ENCODE measurements at regions of chr17 and their contacts with region 1.

Region 1: GRCh38 chr17:39754161-39754951 is 16.6 kb downstream of the GRB7 start:
- DNase-seq: peak; percentile 98
- H3K4me3 ChIP-seq: peak overlapping the region; percentile 75 to 86 (median 82)
- H3K27ac ChIP-seq: peak overlapping the region; percentile 89 to 97 (median 94)
- H3K4me1 ChIP-seq: peaks cover 20 to 26% (median 24%) of the 10 kb centered on the region in 4 donors
- H3K27me3 ChIP-seq: peaks cover 0 to 12% (median 0%) of the 10 kb centered on the region in 4 donors
- CTCF ChIP-seq: peak; percentile 98 to 99 (median 99)
- EP300 ChIP-seq: no peak
- POLR2A ChIP-seq: no peak

Region 2: GRCh38 chr17:39621523-39622379 is 132.6 kb before region 1 on chr17:
- intact Hi-C with region 1: loop called (anchors 1 kb)
- DNase-seq: peak; percentile 99
- H3K4me3 ChIP-seq: no peak overlapping the region
- H3K27ac ChIP-seq: no peak overlapping the region
- H3K4me1 ChIP-seq: peaks cover 3 to 47% (median 36%) of the 10 kb centered on the region in 4 donors
- H3K27me3 ChIP-seq: peaks cover 0 to 48% (median 11%) of the 10 kb centered on the region in 4 donors
- CTCF ChIP-seq: peak; percentile 99 to 100 (median 100)
- EP300 ChIP-seq: no peak
- POLR2A ChIP-seq: no peak

Region 3: GRCh38 chr17:39636927-39637736 is 117.2 kb before region 1 on chr17 and contains the start of gene STARD3:
- intact Hi-C with region 1: loop called (anchors 5 kb)
- DNase-seq: peak; percentile 97
- H3K4me3 ChIP-seq: peak within 1 kb of the TSS; percentile 78 to 95 (median 90)
- H3K27ac ChIP-seq: peak within 1 kb of the TSS; percentile 83 to 90 (median 89)
- H3K4me1 ChIP-seq: peaks cover 52 to 75% (median 66%) of the 10 kb centered on the region in 4 donors
- H3K27me3 ChIP-seq: peaks cover 0 to 6% (median 0%) of the 10 kb centered on the region in 4 donors
- CTCF ChIP-seq: peak in 2 of 3 experiments; percentile 17 to 23
- EP300 ChIP-seq: no peak
- POLR2A ChIP-seq: peak; percentile 6
- total RNA-seq, gene STARD3: 27.5 to 47.3 (median 38.6) TPM

Region 4: DNA sequence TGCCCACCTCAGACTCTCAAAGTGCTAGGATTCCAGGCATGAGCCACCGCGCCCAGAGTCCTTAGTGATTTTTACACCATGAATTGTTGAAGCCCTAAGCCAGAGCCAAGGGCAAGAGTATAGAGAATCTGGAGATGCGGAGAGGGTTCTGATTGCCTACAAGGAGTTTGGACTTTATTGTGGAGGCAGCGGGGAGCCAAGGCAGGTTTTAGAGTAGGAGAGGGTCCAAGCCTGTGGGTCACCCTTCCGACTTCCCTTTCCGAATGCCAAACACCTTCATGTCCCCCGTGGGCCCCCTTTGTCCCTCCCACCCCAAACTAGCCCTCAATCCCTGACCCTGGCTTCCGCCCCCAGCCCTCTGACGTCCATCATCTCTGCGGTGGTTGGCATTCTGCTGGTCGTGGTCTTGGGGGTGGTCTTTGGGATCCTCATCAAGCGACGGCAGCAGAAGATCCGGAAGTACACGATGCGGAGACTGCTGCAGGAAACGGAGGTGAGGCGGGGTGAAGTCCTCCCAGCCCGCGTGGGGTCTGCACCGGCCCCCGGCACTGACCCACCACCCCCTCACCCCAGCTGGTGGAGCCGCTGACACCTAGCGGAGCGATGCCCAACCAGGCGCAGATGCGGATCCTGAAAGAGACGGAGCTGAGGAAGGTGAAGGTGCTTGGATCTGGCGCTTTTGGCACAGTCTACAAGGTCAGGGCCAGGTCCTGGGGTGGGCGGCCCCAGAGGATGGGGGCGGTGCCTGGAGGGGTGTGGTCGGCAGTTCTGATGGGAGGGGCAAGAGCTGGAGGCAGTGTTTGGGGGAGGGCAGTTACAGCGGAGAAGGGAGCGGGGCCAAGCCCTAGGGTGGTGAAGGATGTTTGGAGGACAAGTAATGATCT is 31.1 kb before region 1 on chr17:
- intact Hi-C with region 1: no loop called
- DNase-seq: no peak
- H3K4me3 ChIP-seq: no peak overlapping the region
- H3K27ac ChIP-seq: no peak overlapping the region
- H3K4me1 ChIP-seq: peaks cover 0 to 5% (median 0%) of the 10 kb centered on the region in 4 donors
- H3K27me3 ChIP-seq: no peaks in the 10 kb centered on the region
- CTCF ChIP-seq: no peak
- EP300 ChIP-seq: no peak
- POLR2A ChIP-seq: no peak

Region 5: GRCh38 chr17:39952680-39953470 is 198.5 kb after region 1 on chr17:
- intact Hi-C with region 1: loop called (anchors 10 kb)
- DNase-seq: peak; percentile 100
- H3K4me3 ChIP-seq: peak overlapping the region; percentile 47 to 57 (median 49)
- H3K27ac ChIP-seq: peak overlapping the region; percentile 60 to 78 (median 66)
- H3K4me1 ChIP-seq: peaks cover 14 to 16% (median 15%) of the 10 kb centered on the region in 4 donors
- H3K27me3 ChIP-seq: no peaks in the 10 kb centered on the region
- CTCF ChIP-seq: no peak
- EP300 ChIP-seq: no peak
- POLR2A ChIP-seq: no peak